Aorta (tissue), 5 donors: ENCODE measurements at regions of chr6 and their contacts with region 1.

Region 1: DNA sequence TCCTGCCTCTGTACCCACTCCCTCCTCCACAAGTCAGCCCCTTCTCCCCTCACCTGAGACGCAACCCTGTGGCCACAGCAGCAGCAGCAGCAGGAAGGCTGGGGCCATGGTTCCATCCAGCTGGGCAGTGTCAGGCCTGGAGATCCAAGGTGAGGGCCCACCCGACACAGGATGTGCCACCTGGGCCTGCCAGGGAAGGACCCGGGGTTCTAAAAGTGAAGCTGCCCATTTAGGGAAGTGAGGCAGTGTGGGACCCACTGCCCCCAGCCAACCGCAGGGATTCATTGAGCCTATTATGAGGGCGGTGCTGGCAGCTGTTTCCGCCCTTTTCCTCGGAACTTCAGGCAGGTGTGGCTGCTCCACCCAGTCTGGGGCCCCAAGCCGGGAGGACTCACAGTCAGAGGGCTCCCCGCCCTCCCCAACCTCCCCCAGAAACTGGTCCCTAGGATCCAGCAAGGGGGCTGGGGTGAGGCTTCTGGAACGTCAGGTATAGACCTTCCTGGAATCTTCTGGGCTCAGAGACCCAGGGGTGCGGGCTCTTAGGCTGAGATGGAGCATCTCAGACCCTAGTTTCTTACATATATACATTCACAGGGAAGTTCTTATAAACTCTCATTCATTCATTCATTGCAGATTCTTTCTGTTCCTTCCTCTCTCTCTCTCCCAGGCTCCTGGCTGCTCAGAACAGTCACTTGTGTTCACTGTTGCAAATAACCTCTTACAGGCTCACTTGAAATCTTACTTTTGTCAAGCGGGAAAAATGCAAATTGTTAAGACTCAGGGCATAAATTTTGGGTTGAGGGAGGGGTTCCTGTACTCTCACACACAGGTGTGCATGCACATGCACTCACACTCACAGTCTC is at the start of gene TREML2:
- DNase-seq: no peak
- ATAC-seq: peak; percentile 24
- H3K4me3 ChIP-seq: no peak within 1 kb of the TSS
- H3K27ac ChIP-seq: no peak within 1 kb of the TSS
- H3K4me1 ChIP-seq: no peaks in the 10 kb centered on the region
- H3K27me3 ChIP-seq: no peaks in the 10 kb centered on the region
- total RNA-seq, gene TREML2: 0.30 to 0.62 TPM

Region 2: DNA sequence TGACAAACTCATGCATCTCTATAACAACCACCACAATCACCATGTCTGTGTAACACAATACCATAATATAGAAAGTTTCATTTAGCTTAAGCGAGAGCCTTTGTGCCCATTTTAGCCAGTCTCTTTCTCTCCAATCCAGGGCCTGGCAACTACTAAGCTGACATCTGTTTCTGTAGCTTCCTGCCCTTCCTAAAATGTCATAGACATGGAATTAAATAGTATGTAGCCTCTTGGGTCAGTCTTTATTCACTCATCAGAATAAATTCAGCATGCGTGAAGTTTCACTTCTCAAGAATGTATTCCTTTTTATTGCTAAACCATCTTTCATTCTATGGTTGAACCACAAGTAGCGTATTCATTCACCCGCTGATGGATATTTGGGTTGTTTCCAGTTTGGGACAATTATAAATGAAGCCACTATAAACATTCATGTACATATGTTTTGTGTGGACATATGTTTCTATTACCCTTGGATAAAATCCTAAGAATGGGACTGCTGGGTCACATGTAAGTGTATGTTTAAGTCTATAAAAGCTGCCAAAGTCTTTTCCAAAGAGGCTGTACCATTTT is 36.5 kb before region 1 on chr6:
- intact Hi-C with region 1: loop called in 1 of 2 experiments (anchors 2 kb)
- DNase-seq: no peak
- ATAC-seq: no peak
- H3K4me3 ChIP-seq: no peak overlapping the region
- H3K27ac ChIP-seq: no peak overlapping the region
- H3K4me1 ChIP-seq: no peaks in the 10 kb centered on the region
- H3K27me3 ChIP-seq: no peaks in the 10 kb centered on the region

Region 3: DNA sequence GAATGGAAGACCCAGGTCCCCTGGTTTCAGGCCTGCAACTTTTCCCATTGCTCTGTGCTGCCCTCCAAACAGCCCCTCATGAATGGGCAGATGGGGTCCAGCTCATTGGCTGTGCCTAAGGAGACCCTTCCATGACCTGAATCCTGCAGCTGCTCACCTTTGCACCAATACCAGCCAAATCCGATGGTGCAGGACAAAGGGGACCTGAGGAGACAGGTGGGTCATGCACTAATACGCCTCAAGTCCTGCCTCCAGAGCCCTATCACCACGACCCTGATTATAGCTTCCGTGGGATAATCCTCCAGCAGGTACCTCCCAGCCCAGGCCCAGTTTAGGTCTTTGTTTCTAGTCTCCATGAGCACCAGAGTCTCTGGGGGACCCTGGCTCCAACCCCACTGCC is 68.6 kb after region 1 on chr6:
- intact Hi-C with region 1: no loop called
- DNase-seq: no peak
- ATAC-seq: no peak
- H3K4me3 ChIP-seq: no peak overlapping the region
- H3K27ac ChIP-seq: no peak overlapping the region
- H3K4me1 ChIP-seq: no peaks in the 10 kb centered on the region
- H3K27me3 ChIP-seq: no peaks in the 10 kb centered on the region